Activated CD8-positive, alpha-beta T cell treated with anti-CD3 and anti-CD28 coated beads, Interleukin-2, amount 10 ng/mL, durations not matched to agents 7 days and 5 days (primary cell): ENCODE measurements at regions of chr9 and their contacts with region 1.

Region 1: DNA sequence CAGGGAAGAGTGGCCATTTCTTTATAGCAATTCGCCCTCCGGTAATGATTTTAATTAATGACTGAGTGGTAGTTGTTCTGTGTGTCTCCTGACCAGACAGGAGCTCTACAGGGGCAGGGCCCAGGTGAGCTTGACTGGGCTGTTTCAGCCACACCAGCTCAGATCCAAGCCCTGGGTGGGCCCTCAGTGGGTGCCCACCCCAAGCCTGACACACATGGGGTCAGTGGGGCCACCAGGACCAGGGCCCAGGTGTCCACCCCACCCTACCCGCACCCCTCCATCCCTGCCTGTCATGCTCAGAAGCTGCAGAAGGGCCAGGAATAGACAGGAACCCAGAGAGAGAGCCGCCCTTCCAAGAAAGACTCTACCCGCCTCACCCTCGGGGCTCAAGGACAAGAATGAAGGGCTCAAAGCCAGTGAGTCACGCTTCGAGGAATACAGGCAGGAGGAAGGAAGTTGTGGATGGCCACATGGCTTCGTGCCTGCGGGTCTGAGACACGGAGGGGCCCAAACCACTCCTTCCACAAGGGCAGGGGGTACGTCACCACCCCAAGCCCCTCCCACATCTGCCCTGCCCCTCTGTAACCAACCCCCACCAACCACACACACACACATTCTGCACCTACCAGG is 56.2 kb upstream of the STXBP1 start:
- DNase-seq: peak; percentile 93
- ATAC-seq: peak; percentile 89
- H3K4me3 Mint-ChIP-seq: peak overlapping the region; percentile 76
- H3K27ac Mint-ChIP-seq: peak overlapping the region; percentile 97
- H3K4me1 Mint-ChIP-seq: peaks cover 88% of the 10 kb centered on the region
- H3K27me3 Mint-ChIP-seq: no peaks in the 10 kb centered on the region

Region 2: DNA sequence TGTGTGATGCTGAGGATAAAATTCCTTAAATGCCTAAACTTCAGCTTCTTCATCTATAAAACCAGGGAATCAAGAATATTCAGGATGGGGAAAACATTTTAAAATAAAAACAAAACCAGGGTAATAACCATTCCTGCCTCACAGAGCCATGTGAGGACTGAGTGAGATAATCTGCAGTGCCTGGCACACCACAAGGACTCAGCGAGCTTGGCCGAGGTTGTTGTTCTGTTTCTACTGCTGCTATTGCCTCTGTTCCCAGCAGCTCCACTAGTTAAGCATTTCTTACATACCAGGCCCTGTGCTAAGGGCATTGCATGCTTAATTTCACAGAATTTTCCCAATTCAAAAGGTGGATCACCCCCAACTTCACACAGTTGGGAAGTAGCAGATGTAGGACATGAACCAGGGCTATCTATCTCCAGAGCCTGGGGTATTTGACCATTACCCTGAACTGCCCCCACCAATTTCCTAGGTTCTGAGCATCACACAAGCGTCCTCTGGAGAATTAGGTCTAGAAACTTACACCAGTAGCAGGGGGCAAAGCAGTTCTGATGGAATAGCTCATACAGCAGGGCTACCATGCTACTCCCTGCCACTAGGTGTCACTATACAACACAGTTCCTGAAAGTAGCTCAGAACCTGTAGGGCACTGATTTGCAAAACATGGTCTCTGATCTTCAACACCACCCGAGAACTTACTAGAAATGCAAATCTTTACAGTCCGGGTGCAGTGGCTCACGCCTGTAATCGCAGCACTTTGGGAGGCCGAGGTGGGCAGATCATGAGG is 30.3 kb before region 1 on chr9:
- CTCF ChIA-PET with region 1: interaction called, 19 read pairs
- POLR2A ChIA-PET with region 1: no interaction called
- DNase-seq: peak; percentile 59
- ATAC-seq: peak; percentile 50
- H3K4me3 Mint-ChIP-seq: no peak overlapping the region
- H3K27ac Mint-ChIP-seq: no peak overlapping the region
- H3K4me1 Mint-ChIP-seq: peaks cover 18% of the 10 kb centered on the region
- H3K27me3 Mint-ChIP-seq: no peaks in the 10 kb centered on the region

Region 3: GRCh38 chr9:127568971-127569885 is 13.3 kb after region 1 on chr9:
- CTCF ChIA-PET with region 1: interaction called, 3 read pairs
- POLR2A ChIA-PET with region 1: interaction called, 16 read pairs
- DNase-seq: peak; percentile 88
- ATAC-seq: peak; percentile 81
- H3K4me3 Mint-ChIP-seq: peak overlapping the region; percentile 86
- H3K27ac Mint-ChIP-seq: peak overlapping the region; percentile 92
- H3K4me1 Mint-ChIP-seq: peaks cover 69% of the 10 kb centered on the region
- H3K27me3 Mint-ChIP-seq: no peaks in the 10 kb centered on the region